ENCODE measurements at regions of chr3 and their contacts with region 1.

Region 1: DNA sequence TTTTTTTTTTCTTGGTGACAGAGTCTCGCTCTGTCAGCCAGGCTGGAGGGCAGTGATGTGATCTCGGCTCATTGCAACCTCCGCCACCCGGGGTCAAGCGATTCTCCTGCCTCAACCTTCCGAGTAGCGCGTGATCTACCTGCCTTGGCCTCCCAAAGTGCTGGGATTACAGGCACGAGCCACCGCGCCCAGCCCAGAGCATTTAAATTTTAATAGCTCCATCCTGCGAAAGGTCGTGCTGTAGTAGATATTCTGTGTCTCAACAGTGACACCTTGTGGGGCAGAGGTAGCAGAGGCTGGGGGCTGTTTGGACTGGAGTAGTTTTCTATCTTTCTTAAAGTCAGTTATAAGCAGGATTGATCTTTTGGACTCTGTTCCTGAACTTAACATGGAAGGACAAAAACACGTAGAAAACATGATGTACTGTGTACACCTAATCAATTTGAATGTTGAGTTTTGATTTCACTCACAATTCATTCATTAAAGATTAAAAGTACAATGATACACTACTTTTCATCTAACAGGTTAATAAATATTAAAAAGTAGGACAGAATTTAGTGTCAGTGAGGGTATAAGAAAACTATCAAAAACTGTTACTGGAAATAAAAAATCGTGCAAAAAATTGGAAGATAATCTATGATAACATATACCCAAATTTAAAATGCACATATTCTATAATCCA is 11.0 kb upstream of the PDCD6IP start:
- DNase-seq: peak; percentile 9 to 83 (median 48)
- ATAC-seq: peak; percentile 93 to 97 (median 95)
- H3K4me3 ChIP-seq: peak overlapping the region in 1 of 2 donors; percentile 33
- H3K4me3 Mint-ChIP-seq: peak overlapping the region in 1 of 3 donors; percentile 58
- H3K27ac ChIP-seq: no peak overlapping the region
- H3K27ac Mint-ChIP-seq: no peak overlapping the region
- H3K4me1 ChIP-seq: peaks cover 0 to 4% of the 10 kb centered on the region in 2 experiments
- H3K4me1 Mint-ChIP-seq: peaks cover 2 to 9% (median 9%) of the 10 kb centered on the region in 3 donors
- H3K27me3 ChIP-seq: peaks cover 0 to 9% of the 10 kb centered on the region in 2 experiments
- H3K27me3 Mint-ChIP-seq: peaks cover under 1 to 12% of the 10 kb centered on the region in 2 donors

Region 2: GRCh38 chr3:33131331-33132018 is 656.0 kb before region 1 on chr3:
- CTCF ChIA-PET with region 1: interaction called, 8 to 26 read pairs
- POLR2A ChIA-PET with region 1: no interaction called
- DNase-seq: peak in 15 of 35 experiments; percentile 6 to 64 (median 18)
- ATAC-seq: peak in 3 of 4 experiments; percentile 58 to 72 (median 63)
- H3K4me3 ChIP-seq: no peak overlapping the region
- H3K4me3 Mint-ChIP-seq: no peak overlapping the region
- H3K27ac ChIP-seq: no peak overlapping the region
- H3K27ac Mint-ChIP-seq: no peak overlapping the region
- H3K4me1 ChIP-seq: peaks cover 0 to 2% of the 10 kb centered on the region in 2 experiments
- H3K4me1 Mint-ChIP-seq: peaks cover 0 to 7% (median 4%) of the 10 kb centered on the region in 3 donors
- H3K27me3 ChIP-seq: no peaks in the 10 kb centered on the region
- H3K27me3 Mint-ChIP-seq: no peaks in the 10 kb centered on the region

Region 3: DNA sequence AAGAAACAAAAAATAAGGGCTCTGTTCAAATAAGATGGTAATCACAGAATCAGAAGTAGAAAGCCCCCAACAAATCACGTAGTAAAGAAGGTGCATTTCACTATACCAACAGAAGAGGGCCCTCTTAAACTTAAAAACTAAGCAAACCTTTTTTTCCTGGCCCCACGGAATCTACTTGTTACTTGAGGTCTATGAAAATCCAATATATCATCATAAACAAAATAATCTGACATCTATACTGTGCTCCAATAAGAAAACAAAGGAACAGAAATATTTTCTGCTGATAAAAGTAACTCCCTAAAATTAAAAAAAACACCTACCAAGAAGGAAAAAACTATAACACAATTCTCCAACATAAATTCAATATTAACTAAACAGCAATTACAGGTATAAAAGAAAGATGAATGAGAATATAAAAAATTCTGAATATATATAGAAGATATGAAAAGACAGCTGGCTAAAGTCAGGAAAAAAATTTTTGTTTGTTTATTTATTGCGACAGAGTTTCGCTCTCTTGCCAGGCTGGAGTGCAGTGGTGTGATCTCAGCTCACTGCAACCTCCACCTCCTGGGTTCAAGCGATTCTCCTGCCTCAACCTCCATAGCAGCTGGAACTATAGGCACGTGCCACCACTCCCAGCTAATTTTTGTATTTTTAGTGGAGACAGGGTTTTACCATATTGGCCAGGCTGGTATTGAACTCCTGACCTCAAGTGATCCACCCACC is 151.2 kb before region 1 on chr3:
- CTCF ChIA-PET with region 1: interaction called, 13 to 23 read pairs
- POLR2A ChIA-PET with region 1: no interaction called
- DNase-seq: peak in 3 of 35 experiments; percentile 6 to 58 (median 16)
- ATAC-seq: no peak
- H3K4me3 ChIP-seq: no peak overlapping the region
- H3K4me3 Mint-ChIP-seq: no peak overlapping the region
- H3K27ac ChIP-seq: no peak overlapping the region
- H3K27ac Mint-ChIP-seq: no peak overlapping the region
- H3K4me1 ChIP-seq: no peaks in the 10 kb centered on the region
- H3K4me1 Mint-ChIP-seq: no peaks in the 10 kb centered on the region
- H3K27me3 ChIP-seq: no peaks in the 10 kb centered on the region
- H3K27me3 Mint-ChIP-seq: no peaks in the 10 kb centered on the region

Region 4: DNA sequence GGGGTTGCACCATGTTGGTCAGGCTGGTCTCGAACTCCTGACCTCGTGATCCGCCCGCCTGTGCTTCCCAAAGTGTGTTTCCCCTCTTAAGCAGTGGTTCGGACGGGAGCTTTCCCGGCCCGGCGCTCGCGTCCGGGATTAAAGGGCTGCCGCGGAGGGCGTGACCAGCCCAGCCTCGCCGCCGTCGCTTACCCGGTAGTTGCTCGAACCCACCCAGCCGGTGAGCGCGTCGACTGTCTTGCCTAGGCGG is 69.9 kb before region 1 on chr3:
- CTCF ChIA-PET with region 1: interaction called, 3 to 11 read pairs
- POLR2A ChIA-PET with region 1: interaction called in 1 of 2 experiments, 3 read pairs
- DNase-seq: peak in 12 of 35 experiments; percentile 16 to 58 (median 40)
- ATAC-seq: peak; percentile 46 to 67 (median 58)
- H3K4me3 ChIP-seq: peak overlapping the region; percentile 93 to 94
- H3K4me3 Mint-ChIP-seq: peak overlapping the region in 2 of 3 donors; percentile 97 to 98
- H3K27ac ChIP-seq: peak overlapping the region; percentile 94
- H3K27ac Mint-ChIP-seq: peak overlapping the region; percentile 53 to 87
- H3K4me1 ChIP-seq: peaks cover 13 to 14% of the 10 kb centered on the region in 2 experiments
- H3K4me1 Mint-ChIP-seq: peaks cover 0 to 13% (median 12%) of the 10 kb centered on the region in 3 donors
- H3K27me3 ChIP-seq: no peaks in the 10 kb centered on the region
- H3K27me3 Mint-ChIP-seq: no peaks in the 10 kb centered on the region

Region 5: GRCh38 chr3:33773637-33774036 is 13.8 kb before region 1 on chr3:
- CTCF ChIA-PET with region 1: interaction called, 9 to 17 read pairs
- POLR2A ChIA-PET with region 1: interaction called in 1 of 2 experiments, 12 read pairs
- DNase-seq: no peak
- ATAC-seq: no peak
- H3K4me3 ChIP-seq: no peak overlapping the region
- H3K4me3 Mint-ChIP-seq: no peak overlapping the region
- H3K27ac ChIP-seq: no peak overlapping the region
- H3K27ac Mint-ChIP-seq: no peak overlapping the region
- H3K4me1 ChIP-seq: no peaks in the 10 kb centered on the region
- H3K4me1 Mint-ChIP-seq: no peaks in the 10 kb centered on the region
- H3K27me3 ChIP-seq: peaks cover 0 to 5% of the 10 kb centered on the region in 2 experiments
- H3K27me3 Mint-ChIP-seq: peaks cover 0 to 3% of the 10 kb centered on the region in 2 donors

Region 6: GRCh38 chr3:33798411-33799201 is 11.1 kb after region 1 on chr3 and contains the start of gene PDCD6IP:
- CTCF ChIA-PET with region 1: interaction called, 4 to 46 read pairs
- POLR2A ChIA-PET with region 1: interaction called in 1 of 2 experiments, 4 read pairs
- DNase-seq: peak; percentile 62 to 91 (median 80)
- ATAC-seq: peak; percentile 85 to 90 (median 86)
- H3K4me3 ChIP-seq: peak within 1 kb of the TSS; percentile 84 to 98
- H3K4me3 Mint-ChIP-seq: peak within 1 kb of the TSS; percentile 92 to 99 (median 99)
- H3K27ac ChIP-seq: peak within 1 kb of the TSS; percentile 69
- H3K27ac Mint-ChIP-seq: peak within 1 kb of the TSS; percentile 96 to 98
- H3K4me1 ChIP-seq: peaks cover 22 to 24% of the 10 kb centered on the region in 2 experiments
- H3K4me1 Mint-ChIP-seq: peaks cover 52 to 67% (median 58%) of the 10 kb centered on the region in 3 donors
- H3K27me3 ChIP-seq: no peaks in the 10 kb centered on the region
- H3K27me3 Mint-ChIP-seq: no peaks in the 10 kb centered on the region
- total RNA-seq, gene PDCD6IP: 139 to 216 (median 189) TPM

Measured in T-cell (primary cell).